GM12878 (cell line): ENCODE measurements at regions of chr16 and their contacts with region 1.

Region 1: DNA sequence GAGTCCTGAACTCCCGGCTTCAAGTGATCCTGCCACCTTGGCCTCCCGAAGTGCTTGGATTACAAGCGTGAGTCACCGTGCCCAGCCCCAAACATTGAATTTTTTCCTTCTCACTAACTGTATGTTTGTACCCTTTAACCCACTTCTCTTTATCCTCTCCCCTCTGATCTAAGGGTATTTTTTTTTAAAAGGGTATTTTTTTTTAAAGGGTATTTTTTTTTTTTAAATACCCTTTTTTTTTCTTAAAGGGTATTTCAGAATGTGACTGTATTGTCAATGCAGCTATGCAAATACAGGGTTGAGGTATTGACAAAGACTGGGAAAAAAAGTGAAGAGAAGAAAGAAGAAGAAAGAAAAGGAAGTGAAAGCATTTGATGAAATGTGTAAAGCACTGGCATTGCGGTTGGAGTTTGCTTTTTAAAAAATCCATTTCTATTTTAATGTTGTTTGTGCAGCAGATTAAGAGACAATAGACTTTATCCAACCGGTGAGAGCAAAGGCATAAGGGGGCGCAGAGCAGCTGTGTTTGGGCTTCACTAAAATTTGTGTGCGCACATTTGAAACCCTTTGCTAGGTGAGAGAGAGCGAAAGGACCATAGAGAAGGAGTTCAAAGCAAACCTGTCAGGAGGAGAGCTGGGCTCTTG is 42.4 kb downstream of the SYT17 start:
- DNase-seq: peak; percentile 79
- ATAC-seq: peak; percentile 84
- H3K4me3 ChIP-seq: peak overlapping the region; percentile 49
- H3K27ac ChIP-seq: peak overlapping the region; percentile 99
- H3K4me1 ChIP-seq: peaks cover 13% of the 10 kb centered on the region
- H3K27me3 ChIP-seq: no peaks in the 10 kb centered on the region
- CTCF ChIP-seq: peak in 1 of 3 experiments; percentile 25; a peak in 2 of 6 replicates
- EP300 ChIP-seq: peak; percentile 88 to 89; a peak in 3 of 4 replicates
- POLR2A ChIP-seq: no peak
- RAD21 ChIP-seq: peak; percentile 43

Region 2: DNA sequence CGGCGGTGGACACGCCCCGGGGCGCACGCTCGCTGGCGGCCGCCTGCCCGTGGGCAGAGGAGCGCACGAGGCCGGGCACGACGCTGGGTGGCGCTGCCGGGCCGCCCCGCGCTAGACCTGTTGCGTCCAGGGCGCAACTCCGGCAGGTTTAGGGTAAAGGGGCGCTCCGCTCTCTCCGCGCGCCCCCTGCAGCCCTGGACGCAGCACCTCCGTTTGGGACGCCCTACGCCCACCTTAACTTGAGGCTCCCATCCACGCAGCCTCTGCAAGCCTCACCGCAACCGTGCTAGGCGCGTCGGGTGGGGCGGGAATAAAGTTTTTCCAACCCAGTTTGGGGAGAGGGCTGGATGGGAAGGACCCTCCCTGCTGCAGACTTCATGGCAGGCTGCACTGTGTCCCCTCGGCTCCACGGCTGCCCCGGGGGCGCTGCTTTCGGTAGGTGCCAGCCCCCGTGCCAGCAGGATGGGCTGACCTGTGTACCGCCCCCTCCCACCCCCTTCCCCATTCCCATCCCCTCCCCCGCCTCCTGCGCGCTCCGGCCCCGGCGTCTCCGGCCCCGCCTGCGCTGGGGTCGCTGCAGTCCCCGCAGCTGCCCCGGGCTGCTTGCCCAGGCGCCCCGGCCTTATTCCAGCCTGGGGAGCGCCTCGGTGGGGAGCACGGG is 42.6 kb before region 1 on chr16 and contains the start of gene SYT17:
- CTCF ChIA-PET with region 1: no interaction called
- POLR2A ChIA-PET with region 1: no interaction called
- RAD21 ChIA-PET with region 1: no interaction called
- SMC1A ChIA-PET with region 1: no interaction called
- in situ Hi-C with region 1: no loop called
- intact Hi-C with region 1: loop called (anchors 2 kb)
- DNase-seq: no peak
- ATAC-seq: peak; percentile 98
- H3K4me3 ChIP-seq: peak within 1 kb of the TSS; percentile 21; the same call in 1 of the 2 replicates
- H3K27ac ChIP-seq: no peak within 1 kb of the TSS
- H3K4me1 ChIP-seq: no peaks in the 10 kb centered on the region
- H3K27me3 ChIP-seq: no peaks in the 10 kb centered on the region; a peak in 1 of 4 replicates
- CTCF ChIP-seq: peak; percentile 68 to 83 (median 78)
- EP300 ChIP-seq: no peak
- POLR2A ChIP-seq: no peak
- RAD21 ChIP-seq: peak; percentile 75
- polyA plus RNA-seq, gene SYT17: 10.2 to 12.3 TPM

Region 3: DNA sequence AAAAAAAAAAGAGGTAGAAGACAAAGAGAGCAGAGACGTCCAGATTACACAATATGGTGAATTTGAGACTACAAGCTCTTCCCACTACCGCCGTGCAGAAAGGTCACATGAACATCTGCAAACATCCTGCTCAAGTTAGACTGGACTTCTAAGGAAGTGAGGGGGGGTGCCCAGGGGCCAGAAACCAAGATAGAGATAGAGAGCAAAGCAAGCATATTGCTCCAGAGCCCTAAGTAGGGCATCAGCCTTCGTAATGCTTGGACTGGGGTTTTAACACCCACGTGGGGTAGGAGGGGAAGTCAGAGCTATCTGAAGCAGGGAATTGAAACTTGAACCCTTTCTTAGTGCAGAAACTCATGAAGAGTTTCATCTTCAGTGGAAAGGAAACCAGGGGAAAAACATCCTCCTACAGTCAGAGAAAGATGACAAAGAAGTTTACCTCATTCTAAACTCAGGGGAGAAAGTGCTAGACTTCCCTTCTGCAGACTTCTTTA is 83.8 kb after region 1 on chr16:
- CTCF ChIA-PET with region 1: no interaction called
- POLR2A ChIA-PET with region 1: interaction called, 3 read pairs
- RAD21 ChIA-PET with region 1: interaction called, 6 read pairs
- SMC1A ChIA-PET with region 1: interaction called, 4 read pairs
- in situ Hi-C with region 1: no loop called
- intact Hi-C with region 1: loop called (anchors 1 kb)
- DNase-seq: peak; percentile 84
- ATAC-seq: peak; percentile 95
- H3K4me3 ChIP-seq: no peak overlapping the region
- H3K27ac ChIP-seq: peak overlapping the region; percentile 13; the same call in 1 of the 2 replicates
- H3K4me1 ChIP-seq: peaks cover 21% of the 10 kb centered on the region
- H3K27me3 ChIP-seq: no peaks in the 10 kb centered on the region
- CTCF ChIP-seq: no peak
- EP300 ChIP-seq: peak; percentile 26 to 37; a peak in 2 of 4 replicates
- POLR2A ChIP-seq: no peak
- RAD21 ChIP-seq: no peak